Activated T-helper 1 cell treated with anti-CD3 and anti-CD28 coated beads, Interleukin-12 subunit alpha, Interleukin-12 subunit beta, Interleukin-2, Interleukin-4 antibody, amounts not matched to agents 30 ng/mL and 10 ng/mL and 1 ng/mL, durations not matched to agents 14 hours and 24 hours and 36 hours (primary cell): ENCODE measurements at regions of chr14 and their contacts with region 1.

Region 1: GRCh38 chr14:91911474-91912032 is 35.9 kb downstream of the FBLN5 start:
- DNase-seq: peak; percentile 35
- H3K4me3 Mint-ChIP-seq: no peak overlapping the region
- H3K27ac Mint-ChIP-seq: no peak overlapping the region
- H3K4me1 Mint-ChIP-seq: peaks cover 15% of the 10 kb centered on the region
- H3K27me3 Mint-ChIP-seq: peaks cover 3% of the 10 kb centered on the region

Region 2: DNA sequence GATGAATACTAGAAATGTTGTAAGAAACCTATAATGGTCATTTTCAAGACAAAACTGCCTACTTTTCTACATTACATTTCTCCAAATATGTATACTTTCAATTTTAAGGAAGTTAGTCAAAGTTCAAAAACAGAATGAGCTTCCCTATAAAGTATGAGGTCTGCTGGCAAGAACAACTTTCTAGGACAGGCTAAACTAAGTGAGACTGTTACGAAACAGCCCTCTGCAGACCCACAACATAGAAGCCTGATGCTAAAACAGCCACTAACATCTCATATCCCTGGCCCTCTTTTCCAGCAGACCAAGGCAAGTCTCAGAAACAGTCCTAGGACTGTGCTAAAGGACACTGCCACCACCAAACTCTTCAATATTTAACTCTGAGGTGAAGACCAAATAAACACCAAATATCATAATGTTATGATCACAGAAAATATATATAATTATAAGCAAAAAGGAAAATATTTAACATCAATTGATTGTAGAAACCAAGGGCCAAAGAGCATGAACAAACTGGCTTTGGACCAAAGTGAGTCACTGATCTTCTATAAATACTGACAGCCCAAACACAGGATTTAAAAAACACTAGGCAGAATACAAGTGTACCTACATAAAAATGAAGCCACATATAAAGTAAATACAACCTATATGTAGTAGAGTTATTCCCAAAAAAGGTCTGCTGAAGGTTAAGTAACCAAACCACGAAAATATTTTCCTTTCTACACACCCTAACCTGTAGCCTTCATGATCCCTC is 429.1 kb before region 1 on chr14:
- intact Hi-C with region 1: loop called (anchors 5 kb)
- DNase-seq: no peak
- H3K4me3 Mint-ChIP-seq: no peak overlapping the region
- H3K27ac Mint-ChIP-seq: no peak overlapping the region
- H3K4me1 Mint-ChIP-seq: peaks cover 56% of the 10 kb centered on the region
- H3K27me3 Mint-ChIP-seq: no peaks in the 10 kb centered on the region

Region 3: DNA sequence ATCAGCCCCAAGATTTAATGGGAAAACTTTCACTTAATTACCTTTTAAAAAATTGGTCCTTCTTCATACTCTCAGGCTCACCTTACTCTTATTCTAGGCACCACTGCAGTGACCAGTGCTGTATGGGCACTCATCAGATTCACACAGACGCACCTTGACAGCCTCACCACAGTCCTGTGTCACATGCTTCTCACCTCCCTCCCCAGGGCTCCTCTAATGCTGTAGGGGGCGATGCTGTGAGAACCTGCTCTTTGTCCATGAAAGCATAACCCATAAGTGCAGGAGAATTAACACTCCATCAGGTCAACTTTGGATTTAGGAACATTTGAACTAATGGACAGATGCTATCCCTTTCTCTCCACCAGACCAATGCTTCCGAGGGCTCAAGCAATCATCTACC is 387.6 kb before region 1 on chr14:
- intact Hi-C with region 1: no loop called
- DNase-seq: no peak
- H3K4me3 Mint-ChIP-seq: no peak overlapping the region
- H3K27ac Mint-ChIP-seq: no peak overlapping the region
- H3K4me1 Mint-ChIP-seq: no peaks in the 10 kb centered on the region
- H3K27me3 Mint-ChIP-seq: no peaks in the 10 kb centered on the region

Region 4: GRCh38 chr14:91649930-91650329 is 261.6 kb before region 1 on chr14:
- intact Hi-C with region 1: loop called (anchors 1 kb)
- DNase-seq: no peak
- H3K4me3 Mint-ChIP-seq: no peak overlapping the region
- H3K27ac Mint-ChIP-seq: no peak overlapping the region
- H3K4me1 Mint-ChIP-seq: peaks cover 5% of the 10 kb centered on the region
- H3K27me3 Mint-ChIP-seq: peaks cover 4% of the 10 kb centered on the region

Region 5: GRCh38 chr14:91714805-91715204 is 196.7 kb before region 1 on chr14:
- intact Hi-C with region 1: loop called (anchors 2 kb)
- DNase-seq: peak; percentile 40
- H3K4me3 Mint-ChIP-seq: peak overlapping the region; percentile 42
- H3K27ac Mint-ChIP-seq: peak overlapping the region; percentile 70
- H3K4me1 Mint-ChIP-seq: peaks cover 16% of the 10 kb centered on the region
- H3K27me3 Mint-ChIP-seq: no peaks in the 10 kb centered on the region

Region 6: DNA sequence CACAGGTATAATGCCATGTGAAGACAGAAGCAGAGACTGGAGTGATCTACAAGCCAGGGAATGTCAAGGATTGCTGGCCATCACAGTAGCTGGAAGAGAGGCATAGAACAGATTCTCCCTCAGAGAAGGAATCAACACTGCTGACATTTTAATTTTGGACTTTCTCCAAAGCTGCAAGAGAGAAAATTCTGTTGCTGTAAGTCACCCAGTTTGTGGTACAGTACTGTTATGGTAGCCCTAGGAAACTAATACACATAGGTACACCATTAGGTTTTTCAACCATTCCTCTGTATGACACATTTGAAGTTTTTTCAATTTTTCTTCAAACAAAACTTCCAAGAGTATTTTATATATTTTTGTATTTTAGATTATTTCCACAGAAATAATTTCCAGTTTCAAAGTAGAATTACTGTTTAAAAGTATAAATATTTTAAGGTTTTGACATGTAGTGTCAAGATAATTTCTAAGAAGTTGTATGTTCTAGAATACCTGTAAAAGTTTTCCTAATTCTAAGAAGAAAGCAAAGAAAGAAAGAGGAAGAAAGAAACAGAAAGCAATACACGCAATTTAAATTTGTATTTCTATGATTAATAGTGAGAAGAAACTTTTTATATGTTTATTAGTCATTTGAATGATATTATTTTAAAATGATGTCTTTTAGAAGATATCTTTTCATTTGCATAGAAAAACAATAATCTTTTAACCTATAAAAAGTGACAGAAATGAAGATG is 114.8 kb before region 1 on chr14:
- intact Hi-C with region 1: loop called (anchors 5 kb)
- DNase-seq: no peak
- H3K4me3 Mint-ChIP-seq: no peak overlapping the region
- H3K27ac Mint-ChIP-seq: no peak overlapping the region
- H3K4me1 Mint-ChIP-seq: peaks cover 5% of the 10 kb centered on the region
- H3K27me3 Mint-ChIP-seq: no peaks in the 10 kb centered on the region

Region 7: GRCh38 chr14:91826049-91826448 is 85.5 kb before region 1 on chr14:
- intact Hi-C with region 1: no loop called
- DNase-seq: no peak
- H3K4me3 Mint-ChIP-seq: no peak overlapping the region
- H3K27ac Mint-ChIP-seq: no peak overlapping the region
- H3K4me1 Mint-ChIP-seq: peaks cover 19% of the 10 kb centered on the region
- H3K27me3 Mint-ChIP-seq: no peaks in the 10 kb centered on the region

Region 8: GRCh38 chr14:91836119-91836881 is 75.3 kb before region 1 on chr14:
- intact Hi-C with region 1: loop called (anchors 5 kb)
- DNase-seq: peak; percentile 49
- H3K4me3 Mint-ChIP-seq: peak overlapping the region; percentile 85
- H3K27ac Mint-ChIP-seq: no peak overlapping the region
- H3K4me1 Mint-ChIP-seq: peaks cover 67% of the 10 kb centered on the region
- H3K27me3 Mint-ChIP-seq: no peaks in the 10 kb centered on the region